ENCODE measurements at regions of chr1 and their contacts with region 1.

Region 1: GRCh38 chr1:94719926-94720793 is 100.0 kb upstream of the SLC44A3 start:
- DNase-seq: peak; percentile 60
- ATAC-seq: peak; percentile 97
- H3K4me3 ChIP-seq: peak overlapping the region; percentile 13; the same call in 1 of the 2 replicates
- H3K27ac ChIP-seq: no peak overlapping the region
- H3K4me1 ChIP-seq: peaks cover 15% of the 10 kb centered on the region
- H3K27me3 ChIP-seq: no peaks in the 10 kb centered on the region
- CTCF ChIP-seq: no peak
- EP300 ChIP-seq: no peak
- POLR2A ChIP-seq: peak; percentile 64
- RAD21 ChIP-seq: no peak; the same call in 1 of the 2 replicates

Region 2: DNA sequence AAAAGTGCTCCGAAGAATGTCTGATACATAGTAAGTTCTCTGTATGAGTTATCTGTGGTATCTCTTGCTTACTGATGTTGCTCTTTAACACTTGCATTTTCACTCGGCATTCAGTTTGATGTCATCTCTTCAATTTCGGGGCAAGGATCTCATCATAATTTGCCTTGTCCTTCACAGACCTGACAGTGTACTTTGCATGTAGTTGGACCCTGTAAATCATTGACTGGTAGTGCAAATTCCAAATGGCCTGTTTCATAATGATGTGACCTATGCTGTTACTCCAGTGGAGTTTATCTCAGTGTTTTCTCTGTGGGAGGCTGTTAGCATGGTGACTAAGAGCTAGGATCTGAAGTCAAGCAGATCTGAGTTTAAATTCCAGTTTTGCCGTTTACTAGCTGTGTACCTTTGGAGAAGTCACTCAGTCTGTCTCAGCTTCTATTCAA is 336.2 kb before region 1 on chr1:
- CTCF ChIA-PET with region 1: no interaction called
- POLR2A ChIA-PET with region 1: no interaction called
- RAD21 ChIA-PET with region 1: no interaction called
- SMC1A ChIA-PET with region 1: no interaction called
- in situ Hi-C with region 1: no loop called
- intact Hi-C with region 1: no loop called
- DNase-seq: peak; percentile 1
- ATAC-seq: peak; percentile 68
- H3K4me3 ChIP-seq: no peak overlapping the region
- H3K27ac ChIP-seq: no peak overlapping the region
- H3K4me1 ChIP-seq: no peaks in the 10 kb centered on the region
- H3K27me3 ChIP-seq: no peaks in the 10 kb centered on the region
- CTCF ChIP-seq: no peak
- EP300 ChIP-seq: no peak
- POLR2A ChIP-seq: no peak
- RAD21 ChIP-seq: no peak

Region 3: GRCh38 chr1:94669203-94669602 is 51.0 kb before region 1 on chr1:
- CTCF ChIA-PET with region 1: no interaction called
- POLR2A ChIA-PET with region 1: no interaction called
- RAD21 ChIA-PET with region 1: no interaction called
- SMC1A ChIA-PET with region 1: no interaction called
- in situ Hi-C with region 1: no loop called
- intact Hi-C with region 1: loop called (anchors 5 kb)
- DNase-seq: no peak
- ATAC-seq: no peak
- H3K4me3 ChIP-seq: no peak overlapping the region
- H3K27ac ChIP-seq: no peak overlapping the region
- H3K4me1 ChIP-seq: no peaks in the 10 kb centered on the region
- H3K27me3 ChIP-seq: 0 out of 4 replicates have a peak, but pooled peaks cover 0 to 1% of the 10 kb centered on the region in 2 experiments
- CTCF ChIP-seq: no peak
- EP300 ChIP-seq: no peak
- POLR2A ChIP-seq: no peak
- RAD21 ChIP-seq: no peak

Region 4: GRCh38 chr1:94792473-94793295 is 72.5 kb after region 1 on chr1:
- CTCF ChIA-PET with region 1: no interaction called
- POLR2A ChIA-PET with region 1: no interaction called
- RAD21 ChIA-PET with region 1: interaction called, 3 read pairs
- SMC1A ChIA-PET with region 1: interaction called, 3 read pairs
- in situ Hi-C with region 1: no loop called
- intact Hi-C with region 1: loop called (anchors 5 kb)
- DNase-seq: peak; percentile 45
- ATAC-seq: peak; percentile 99
- H3K4me3 ChIP-seq: no peak overlapping the region
- H3K27ac ChIP-seq: no peak overlapping the region
- H3K4me1 ChIP-seq: peaks cover 4% of the 10 kb centered on the region; the same call in 1 of the 2 replicates
- H3K27me3 ChIP-seq: no peaks in the 10 kb centered on the region
- CTCF ChIP-seq: peak in 2 of 3 experiments; percentile 12 to 32; a peak in 1 of 6 replicates
- EP300 ChIP-seq: no peak
- POLR2A ChIP-seq: no peak
- RAD21 ChIP-seq: 0 out of 2 replicates have a peak, but pooled peaks have one; percentile 10

Region 5: DNA sequence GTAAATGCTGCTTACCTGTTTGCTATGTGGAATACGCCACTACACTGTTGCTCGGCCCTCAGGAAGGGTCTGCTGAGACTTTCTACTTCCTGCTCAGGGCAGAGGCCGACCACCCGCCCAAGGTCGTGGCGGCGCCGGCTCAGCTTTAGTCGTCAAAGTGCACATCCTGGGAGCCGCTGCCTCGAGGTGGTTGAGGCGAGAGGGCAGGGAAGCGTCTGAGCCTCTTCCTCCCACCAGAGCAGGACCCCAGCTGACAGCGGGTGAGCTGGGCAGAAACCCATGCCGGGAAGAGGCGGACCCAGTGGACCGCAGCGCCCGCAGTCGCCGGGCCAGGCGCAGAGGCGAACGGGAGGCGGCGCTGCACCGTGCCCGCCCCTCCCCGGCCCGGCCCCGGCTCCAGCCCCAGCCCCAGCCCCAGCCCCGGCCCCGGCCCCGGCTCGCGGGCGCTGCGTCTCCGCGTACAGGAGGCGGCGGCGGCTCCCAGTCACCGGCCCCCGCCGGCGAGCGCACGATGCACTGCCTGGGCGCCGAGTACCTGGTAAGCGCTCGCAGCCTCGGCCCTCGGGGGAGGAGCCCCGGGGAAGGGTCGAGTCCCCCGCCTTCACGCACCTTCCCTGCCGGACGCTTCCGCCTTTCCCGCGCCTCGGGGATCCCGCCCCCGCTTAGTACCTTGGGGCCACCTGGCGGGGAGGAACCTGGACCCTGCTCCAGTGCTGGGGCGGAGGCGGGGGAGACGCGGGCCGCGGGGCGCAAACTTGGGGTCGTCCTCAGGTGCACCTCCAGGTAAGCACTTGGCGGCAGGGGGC is 100.0 kb after region 1 on chr1 and contains the start of gene SLC44A3:
- CTCF ChIA-PET with region 1: no interaction called
- POLR2A ChIA-PET with region 1: no interaction called
- RAD21 ChIA-PET with region 1: no interaction called
- SMC1A ChIA-PET with region 1: no interaction called
- in situ Hi-C with region 1: no loop called
- intact Hi-C with region 1: no loop called
- DNase-seq: no peak
- ATAC-seq: peak; percentile 31; the same call in 2 of the 3 replicates
- H3K4me3 ChIP-seq: no peak within 1 kb of the TSS
- H3K27ac ChIP-seq: no peak within 1 kb of the TSS
- H3K4me1 ChIP-seq: no peaks in the 10 kb centered on the region
- H3K27me3 ChIP-seq: peaks cover 4 to 11% of the 10 kb centered on the region in 2 experiments; a peak in 3 of 4 replicates
- CTCF ChIP-seq: no peak
- EP300 ChIP-seq: no peak
- POLR2A ChIP-seq: no peak
- RAD21 ChIP-seq: no peak
- polyA plus RNA-seq, gene SLC44A3: not detected

Region 6: DNA sequence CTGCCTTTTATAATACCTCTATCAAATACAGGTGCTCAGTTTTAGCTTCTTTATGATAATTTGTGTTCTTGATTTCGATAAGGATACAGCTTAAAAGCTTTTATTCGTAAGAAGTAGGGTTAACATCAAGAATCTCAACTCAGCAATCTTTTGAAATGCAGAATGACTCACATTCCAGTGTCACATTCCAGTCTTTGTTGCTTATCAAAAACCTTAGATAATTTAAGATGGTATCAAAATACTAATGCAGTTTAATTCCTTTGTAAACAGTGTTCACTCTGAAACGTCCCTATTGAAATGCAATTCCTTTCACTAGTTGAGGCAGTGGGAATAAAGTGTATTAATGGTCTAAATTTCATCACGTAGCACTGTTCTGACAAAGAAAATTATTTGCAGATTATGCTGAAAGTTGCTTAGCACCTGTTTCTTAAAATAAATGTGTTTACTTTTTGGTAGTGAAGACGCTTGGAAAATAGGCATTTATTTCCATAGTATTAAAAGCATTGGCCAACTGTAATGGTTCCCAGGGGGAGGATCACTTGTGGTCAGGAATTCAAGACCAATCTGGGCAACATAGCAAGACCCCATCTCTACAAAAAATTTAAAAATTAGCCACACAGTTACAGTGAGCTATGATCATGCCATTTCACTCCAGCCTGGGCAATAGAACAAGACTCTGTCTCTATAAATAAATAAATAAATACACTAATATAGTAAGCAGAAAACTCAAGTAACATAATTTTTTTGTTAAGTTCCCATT is 216.9 kb after region 1 on chr1:
- CTCF ChIA-PET with region 1: no interaction called
- POLR2A ChIA-PET with region 1: no interaction called
- RAD21 ChIA-PET with region 1: no interaction called
- SMC1A ChIA-PET with region 1: no interaction called
- in situ Hi-C with region 1: no loop called
- intact Hi-C with region 1: no loop called
- DNase-seq: no peak
- ATAC-seq: no peak
- H3K4me3 ChIP-seq: no peak overlapping the region
- H3K27ac ChIP-seq: no peak overlapping the region
- H3K4me1 ChIP-seq: no peaks in the 10 kb centered on the region
- H3K27me3 ChIP-seq: no peaks in the 10 kb centered on the region; a peak in 1 of 4 replicates
- CTCF ChIP-seq: no peak
- EP300 ChIP-seq: no peak
- POLR2A ChIP-seq: no peak
- RAD21 ChIP-seq: no peak

Region 7: GRCh38 chr1:95233737-95234500 is 513.8 kb after region 1 on chr1 and contains the start of gene RWDD3:
- CTCF ChIA-PET with region 1: no interaction called
- POLR2A ChIA-PET with region 1: no interaction called
- RAD21 ChIA-PET with region 1: no interaction called
- SMC1A ChIA-PET with region 1: no interaction called
- in situ Hi-C with region 1: no loop called
- intact Hi-C with region 1: no loop called
- DNase-seq: peak; percentile 53
- ATAC-seq: peak; percentile 98
- H3K4me3 ChIP-seq: peak within 1 kb of the TSS; percentile 79
- H3K27ac ChIP-seq: peak within 1 kb of the TSS; percentile 63
- H3K4me1 ChIP-seq: peaks cover 4% of the 10 kb centered on the region; the same call in 1 of the 2 replicates
- H3K27me3 ChIP-seq: peaks cover 0 to 3% of the 10 kb centered on the region in 2 experiments; a peak in 2 of 4 replicates
- CTCF ChIP-seq: peak; percentile 65 to 90 (median 72); a peak in 5 of 6 replicates
- EP300 ChIP-seq: no peak
- POLR2A ChIP-seq: peak; percentile 96
- RAD21 ChIP-seq: peak; percentile 88
- polyA plus RNA-seq, gene RWDD3: 41.1 to 42.9 TPM

Measured in GM12878 (cell line).